Heart left ventricle (tissue), 16 donors: ENCODE measurements at regions of chr22 and their contacts with region 1.

Region 1: DNA sequence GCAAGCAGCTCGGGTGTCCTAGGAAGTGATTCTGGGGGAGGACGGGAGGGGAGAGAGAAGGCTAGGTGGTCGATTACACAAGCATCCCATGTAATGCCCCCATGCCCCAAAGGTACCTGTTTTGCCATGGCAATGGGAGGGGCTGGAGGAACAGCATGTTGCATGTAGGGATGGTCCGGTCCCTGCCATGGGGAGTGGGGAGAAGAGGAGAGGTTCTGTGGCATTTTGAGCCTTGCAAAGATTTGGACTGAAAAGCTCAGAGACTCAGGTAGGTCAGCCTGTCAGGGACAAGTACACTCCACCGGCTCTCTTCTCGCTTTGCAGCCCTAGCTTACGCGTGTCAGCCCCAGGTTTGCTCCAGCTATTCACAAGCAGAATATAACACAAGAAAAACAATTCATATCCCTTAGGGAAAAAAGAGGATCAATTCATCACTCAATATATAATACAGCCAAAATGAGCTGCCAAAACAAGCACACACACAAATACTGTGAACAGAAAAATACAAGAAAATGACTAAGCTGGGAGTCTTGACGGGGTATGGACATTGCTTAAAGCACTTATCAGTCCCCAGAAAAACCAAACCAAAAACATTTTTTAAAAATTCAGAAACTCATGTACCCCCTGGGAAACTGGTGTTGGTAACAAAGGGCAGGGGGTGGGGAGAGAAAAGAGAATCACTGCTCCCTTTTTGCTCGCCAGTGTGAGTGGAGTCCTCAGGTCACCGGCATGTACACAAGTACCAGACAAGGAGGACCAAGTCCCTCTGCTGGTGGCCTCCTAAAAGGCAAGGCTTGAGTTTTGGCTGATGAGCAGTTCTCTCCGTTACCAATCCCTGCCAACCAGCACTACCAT is 21.6 kb downstream of the APOL5 start:
- DNase-seq: no peak
- ATAC-seq: peak in 2 of 4 donors; percentile 34
- H3K4me3 ChIP-seq: no peak overlapping the region
- H3K27ac ChIP-seq: peak overlapping the region in 1 of 12 donors; percentile 7
- H3K4me1 ChIP-seq: peaks cover 0 to 43% (median 26%) of the 10 kb centered on the region in 12 donors
- H3K27me3 ChIP-seq: no peaks in the 10 kb centered on the region
- CTCF ChIP-seq: peak in 8 of 12 donors; percentile 20 to 41 (median 31)
- POLR2A ChIP-seq: no peak

Region 2: DNA sequence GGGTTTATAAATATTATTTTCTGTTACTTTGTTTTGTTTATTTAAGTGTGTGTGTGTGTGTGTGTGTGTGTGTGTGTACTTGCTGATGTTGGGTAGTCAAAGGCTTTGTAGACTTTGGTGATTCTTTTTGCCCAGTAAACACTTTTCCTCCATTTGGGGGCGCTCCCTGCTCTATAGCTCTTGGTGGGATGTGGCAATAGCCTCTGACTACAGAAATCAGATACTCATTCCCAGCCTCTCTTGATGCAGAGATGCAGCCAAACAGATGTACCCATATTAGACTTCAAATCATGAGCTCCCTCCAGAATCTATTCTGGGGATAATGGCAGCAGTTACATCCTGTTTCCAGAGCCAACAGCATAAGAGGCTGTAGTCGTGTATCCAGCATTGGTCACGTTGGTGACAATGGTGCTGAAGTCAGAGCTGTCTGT is 55.0 kb before region 1 on chr22:
- intact Hi-C with region 1: loop called in 1 of 10 experiments (anchors 10 kb)
- DNase-seq: peak in 4 of 5 donors; percentile 12 to 44 (median 26)
- ATAC-seq: peak; percentile 84 to 97 (median 94)
- H3K4me3 ChIP-seq: no peak overlapping the region
- H3K27ac ChIP-seq: peak overlapping the region in 1 of 12 donors; percentile 4
- H3K4me1 ChIP-seq: peaks cover 0 to 6% (median 0%) of the 10 kb centered on the region in 12 donors
- H3K27me3 ChIP-seq: no peaks in the 10 kb centered on the region
- CTCF ChIP-seq: peak in 7 of 12 donors; percentile 15 to 46 (median 26)
- POLR2A ChIP-seq: no peak